ENCODE measurements at regions of chr9 and their contacts with region 1.

Region 1: GRCh38 chr9:129737479-129738274 is 15.2 kb downstream of the PTGES start:
- DNase-seq: peak; percentile 82 to 85 (median 84)
- H3K4me3 ChIP-seq: peak overlapping the region; percentile 31 to 74 (median 55)
- H3K4me3 Mint-ChIP-seq: peak overlapping the region; percentile 70 to 80
- H3K27ac ChIP-seq: peak overlapping the region in 1 of 2 donors; percentile 75
- H3K27ac Mint-ChIP-seq: peak overlapping the region in 6 of 7 donors; percentile 72 to 92 (median 82)
- H3K4me1 ChIP-seq: peaks cover 6 to 16% of the 10 kb centered on the region in 2 donors
- H3K4me1 Mint-ChIP-seq: peaks cover 16% of the 10 kb centered on the region
- H3K27me3 ChIP-seq: peaks cover 0 to 8% of the 10 kb centered on the region in 2 donors
- H3K27me3 Mint-ChIP-seq: peaks cover 13 to 46% (median 20%) of the 10 kb centered on the region in 3 donors
- CTCF ChIP-seq: peak; percentile 95

Region 2: GRCh38 chr9:129761901-129762364 is 24.3 kb after region 1 on chr9:
- intact Hi-C with region 1: loop called in 1 of 2 experiments (anchors 2 kb)
- DNase-seq: peak in 1 of 3 donors; percentile 46
- H3K4me3 ChIP-seq: peak overlapping the region in 1 of 3 experiments; percentile 3
- H3K4me3 Mint-ChIP-seq: peak overlapping the region; percentile 46 to 48
- H3K27ac ChIP-seq: peak overlapping the region; percentile 71 to 85
- H3K27ac Mint-ChIP-seq: peak overlapping the region; percentile 96 to 99 (median 98)
- H3K4me1 ChIP-seq: peaks cover 36 to 55% of the 10 kb centered on the region in 2 donors
- H3K4me1 Mint-ChIP-seq: peaks cover 55% of the 10 kb centered on the region
- H3K27me3 ChIP-seq: no peaks in the 10 kb centered on the region
- H3K27me3 Mint-ChIP-seq: peaks cover 1 to 19% (median 3%) of the 10 kb centered on the region in 3 donors
- CTCF ChIP-seq: no peak

Region 3: DNA sequence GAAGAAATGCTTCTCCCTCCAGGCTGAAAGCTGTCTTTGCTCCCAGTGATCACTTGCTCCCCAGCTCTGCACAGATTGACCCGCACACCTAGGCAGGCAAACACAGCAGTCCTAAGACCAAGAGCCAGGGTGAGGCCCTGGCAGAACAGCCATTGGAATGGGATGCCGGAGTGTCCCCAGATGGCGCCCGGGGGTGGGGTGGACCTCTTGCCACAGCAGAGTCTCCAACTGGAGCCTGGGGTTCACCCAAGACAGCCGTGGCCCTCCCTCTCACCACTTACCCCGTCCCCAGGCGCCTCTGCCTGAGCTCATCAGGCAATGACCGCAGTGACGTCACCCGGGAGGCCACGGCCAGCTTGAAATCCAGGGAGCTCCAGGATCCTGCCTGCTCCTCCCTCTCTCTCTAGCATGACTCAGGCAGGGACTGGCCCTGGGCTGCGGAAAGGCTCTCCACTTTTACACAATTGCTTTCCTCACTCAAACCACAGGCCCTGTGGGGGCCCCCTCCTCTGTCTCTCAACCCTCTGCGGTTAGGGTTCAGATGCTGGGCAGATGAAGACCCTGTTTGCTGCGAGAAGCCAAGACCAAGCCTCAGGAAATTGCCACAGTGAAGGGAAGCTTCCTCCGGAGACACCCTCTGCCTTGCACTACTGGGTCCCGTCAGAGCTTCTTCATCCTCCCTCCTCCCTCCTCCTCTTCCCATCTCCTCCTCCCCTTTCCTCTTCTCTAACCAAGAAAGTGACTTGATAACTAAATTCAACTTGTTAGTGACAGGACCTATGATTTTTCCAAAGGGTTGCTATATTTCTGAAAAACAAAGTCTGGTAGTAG is 39.5 kb after region 1 on chr9:
- intact Hi-C with region 1: loop called in 1 of 2 experiments (anchors 2 kb)
- DNase-seq: peak; percentile 100
- H3K4me3 ChIP-seq: peak overlapping the region in 1 of 3 experiments; percentile 57
- H3K4me3 Mint-ChIP-seq: peak overlapping the region; percentile 71 to 83
- H3K27ac ChIP-seq: peak overlapping the region; percentile 61 to 81
- H3K27ac Mint-ChIP-seq: peak overlapping the region; percentile 95 to 99 (median 97)
- H3K4me1 ChIP-seq: peaks cover 75 to 83% of the 10 kb centered on the region in 2 donors
- H3K4me1 Mint-ChIP-seq: peaks cover 82% of the 10 kb centered on the region
- H3K27me3 ChIP-seq: no peaks in the 10 kb centered on the region
- H3K27me3 Mint-ChIP-seq: peaks cover 10 to 15% (median 10%) of the 10 kb centered on the region in 3 donors
- CTCF ChIP-seq: no peak

Region 4: DNA sequence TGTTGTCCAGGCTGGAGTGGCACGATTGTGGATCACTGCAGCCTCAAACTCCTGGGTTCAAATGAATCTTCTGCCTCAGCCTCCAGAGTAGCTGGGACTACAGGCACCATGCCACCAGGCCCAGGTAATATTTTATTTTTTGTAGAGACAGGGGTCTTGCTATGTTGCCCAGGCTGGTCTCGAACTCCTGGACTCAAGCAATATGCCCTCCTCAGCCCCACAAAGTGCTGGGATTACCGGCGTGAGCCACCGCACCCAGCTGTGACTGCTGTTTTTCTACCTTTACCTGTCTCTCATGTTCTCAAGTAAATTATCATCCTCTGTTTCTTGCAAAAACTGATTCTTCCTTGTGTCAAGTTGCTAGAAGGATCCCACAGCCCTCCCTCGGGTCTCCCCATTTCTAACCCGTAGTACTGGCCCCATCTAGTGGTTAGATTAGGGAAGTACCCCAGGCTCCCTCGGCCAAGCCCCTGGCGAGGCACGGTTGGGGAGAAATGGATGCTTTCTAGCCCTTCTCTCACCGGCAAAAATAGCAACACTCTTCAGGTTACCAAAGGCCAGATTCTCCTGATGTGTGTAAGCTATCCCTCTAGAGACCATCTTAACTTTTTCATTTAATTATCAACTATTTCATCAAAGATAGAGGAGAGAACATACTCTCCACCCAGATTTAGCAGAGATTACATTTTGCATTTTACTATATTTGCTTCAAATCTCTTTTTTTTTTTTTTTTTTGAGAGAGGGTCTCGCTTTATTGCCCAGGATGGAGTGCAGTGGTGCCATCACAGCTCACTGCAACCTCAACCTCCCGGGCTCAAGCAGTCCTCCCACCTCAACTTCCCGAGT is 46.1 kb after region 1 on chr9:
- intact Hi-C with region 1: loop called (anchors 1 kb)
- DNase-seq: peak; percentile 75 to 84 (median 82)
- H3K4me3 ChIP-seq: no peak overlapping the region
- H3K4me3 Mint-ChIP-seq: peak overlapping the region in 1 of 2 donors; percentile 43
- H3K27ac ChIP-seq: no peak overlapping the region
- H3K27ac Mint-ChIP-seq: peak overlapping the region in 6 of 7 donors; percentile 56 to 90 (median 70)
- H3K4me1 ChIP-seq: peaks cover 23 to 30% of the 10 kb centered on the region in 2 donors
- H3K4me1 Mint-ChIP-seq: peaks cover 33% of the 10 kb centered on the region
- H3K27me3 ChIP-seq: no peaks in the 10 kb centered on the region
- H3K27me3 Mint-ChIP-seq: peaks cover 17 to 31% (median 17%) of the 10 kb centered on the region in 3 donors
- CTCF ChIP-seq: peak; percentile 88

Measured in CD14-positive monocyte (primary cell).